ENCODE measurements at regions of chr9 and their contacts with region 1.

Region 1: DNA sequence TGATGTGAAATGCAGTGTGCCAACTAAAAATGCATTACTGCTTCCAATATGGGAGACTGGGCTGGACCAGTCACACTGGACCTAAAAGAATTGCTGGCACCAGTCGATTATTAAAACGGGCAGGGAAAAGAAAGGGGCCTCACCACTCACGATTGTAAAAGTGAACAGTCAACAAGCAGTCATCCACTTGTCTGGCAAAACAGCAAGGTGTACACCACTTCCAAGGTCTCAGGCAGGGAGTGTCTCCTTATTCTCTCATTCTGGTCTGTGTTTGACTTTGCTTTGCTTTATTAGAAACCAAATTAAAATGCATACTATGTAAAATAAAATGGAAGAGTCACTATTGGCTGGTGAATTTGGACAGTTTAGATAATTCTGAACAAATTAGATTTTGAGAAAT is 57.8 kb upstream of the TRPM3 start:
- DNase-seq: no peak
- H3K27ac ChIP-seq: no peak overlapping the region
- CTCF ChIP-seq: no peak

Region 2: DNA sequence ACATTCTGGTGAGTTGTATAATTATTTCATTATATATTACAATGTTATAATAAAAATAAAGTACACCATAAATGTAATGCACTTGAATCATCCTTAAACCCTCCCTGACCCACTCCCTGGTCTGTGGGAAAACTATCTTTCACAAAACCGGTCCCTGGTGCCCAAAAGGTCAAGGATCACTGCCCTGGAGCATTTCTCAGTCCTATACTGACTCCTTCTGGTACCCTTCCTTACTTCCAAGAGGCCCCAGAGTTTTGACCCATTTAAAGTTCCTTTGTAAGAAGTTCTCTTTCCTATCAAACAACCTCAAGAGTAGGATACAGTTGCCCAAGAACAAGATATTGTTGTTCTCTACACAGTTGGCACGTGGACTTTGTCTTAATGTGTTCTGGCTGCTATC is 31.1 kb after region 1 on chr9:
- CTCF ChIA-PET with region 1: interaction called, 10 read pairs
- POLR2A ChIA-PET with region 1: no interaction called
- DNase-seq: no peak
- H3K27ac ChIP-seq: no peak overlapping the region
- CTCF ChIP-seq: no peak